Testis (tissue), 5 donors: ENCODE measurements at regions of chr14 and their contacts with region 1.

Region 1: DNA sequence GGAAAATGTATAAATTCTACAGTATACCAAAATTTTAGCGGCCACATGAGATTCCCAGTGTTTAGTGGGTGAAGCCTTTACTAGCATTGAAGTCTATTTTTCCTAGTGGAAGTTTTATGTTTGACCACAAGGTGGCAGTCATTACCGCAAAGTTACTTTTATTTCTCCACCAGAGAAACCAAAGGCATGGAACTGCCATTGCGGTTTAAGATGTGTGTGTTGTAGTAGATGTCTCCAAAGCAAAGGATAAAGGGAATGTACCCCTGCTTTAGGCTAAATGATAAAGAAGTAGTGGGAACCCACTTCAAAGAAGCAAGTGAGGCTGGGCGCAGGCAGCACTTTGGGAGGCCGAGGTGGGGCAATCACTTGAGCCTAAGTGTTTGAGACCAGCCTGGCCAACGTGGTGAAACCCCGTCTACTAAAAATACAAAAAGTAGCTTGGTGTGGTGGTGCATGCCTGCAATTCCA is 140.5 kb downstream of the PRKCH start:
- DNase-seq: peak; percentile 43
- H3K4me3 ChIP-seq: no peak overlapping the region
- H3K27ac ChIP-seq: no peak overlapping the region
- H3K4me1 ChIP-seq: peaks cover 11% of the 10 kb centered on the region
- H3K27me3 ChIP-seq: no peaks in the 10 kb centered on the region
- CTCF ChIP-seq: peak; percentile 91 to 94 (median 92)
- POLR2A ChIP-seq: no peak

Region 2: DNA sequence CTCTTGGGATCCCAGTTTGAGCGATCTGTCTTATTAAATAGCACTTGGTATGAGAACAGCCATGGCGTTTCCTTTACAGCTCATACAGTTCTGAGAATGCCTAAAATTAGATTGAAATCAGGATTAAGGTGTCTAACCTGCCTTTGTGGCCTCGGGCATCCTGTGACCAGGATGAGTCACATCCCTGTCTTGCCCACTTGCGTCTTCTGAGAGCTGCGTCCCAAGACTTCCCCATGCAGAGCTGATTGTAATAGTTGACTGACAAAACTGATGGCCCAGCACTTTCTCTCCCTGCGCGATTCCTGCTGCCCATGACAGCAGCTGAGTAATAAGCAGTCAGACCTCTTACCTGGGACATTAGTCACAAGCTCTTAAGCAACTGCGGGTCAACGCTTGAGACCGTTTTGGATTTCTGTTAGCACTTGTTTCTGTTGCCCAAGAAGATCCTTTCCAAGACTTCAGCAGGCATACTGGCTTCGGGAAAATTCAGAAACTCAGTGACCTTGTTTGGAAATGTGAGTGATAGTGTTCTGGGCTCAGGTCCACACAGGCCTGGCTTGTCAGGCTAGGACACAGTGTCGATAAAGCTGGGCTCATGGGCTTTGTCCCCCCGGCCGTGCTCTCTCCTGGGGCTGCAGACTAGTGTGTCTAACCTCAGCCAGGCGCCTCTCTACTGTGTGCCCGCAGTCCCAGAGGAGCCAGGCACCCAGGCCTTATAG is 63.6 kb after region 1 on chr14:
- intact Hi-C with region 1: loop called (anchors 5 kb)
- DNase-seq: peak; percentile 68
- H3K4me3 ChIP-seq: no peak overlapping the region
- H3K27ac ChIP-seq: peak overlapping the region; percentile 47 to 89
- H3K4me1 ChIP-seq: peaks cover 40% of the 10 kb centered on the region
- H3K27me3 ChIP-seq: no peaks in the 10 kb centered on the region
- CTCF ChIP-seq: no peak
- POLR2A ChIP-seq: no peak

Region 3: DNA sequence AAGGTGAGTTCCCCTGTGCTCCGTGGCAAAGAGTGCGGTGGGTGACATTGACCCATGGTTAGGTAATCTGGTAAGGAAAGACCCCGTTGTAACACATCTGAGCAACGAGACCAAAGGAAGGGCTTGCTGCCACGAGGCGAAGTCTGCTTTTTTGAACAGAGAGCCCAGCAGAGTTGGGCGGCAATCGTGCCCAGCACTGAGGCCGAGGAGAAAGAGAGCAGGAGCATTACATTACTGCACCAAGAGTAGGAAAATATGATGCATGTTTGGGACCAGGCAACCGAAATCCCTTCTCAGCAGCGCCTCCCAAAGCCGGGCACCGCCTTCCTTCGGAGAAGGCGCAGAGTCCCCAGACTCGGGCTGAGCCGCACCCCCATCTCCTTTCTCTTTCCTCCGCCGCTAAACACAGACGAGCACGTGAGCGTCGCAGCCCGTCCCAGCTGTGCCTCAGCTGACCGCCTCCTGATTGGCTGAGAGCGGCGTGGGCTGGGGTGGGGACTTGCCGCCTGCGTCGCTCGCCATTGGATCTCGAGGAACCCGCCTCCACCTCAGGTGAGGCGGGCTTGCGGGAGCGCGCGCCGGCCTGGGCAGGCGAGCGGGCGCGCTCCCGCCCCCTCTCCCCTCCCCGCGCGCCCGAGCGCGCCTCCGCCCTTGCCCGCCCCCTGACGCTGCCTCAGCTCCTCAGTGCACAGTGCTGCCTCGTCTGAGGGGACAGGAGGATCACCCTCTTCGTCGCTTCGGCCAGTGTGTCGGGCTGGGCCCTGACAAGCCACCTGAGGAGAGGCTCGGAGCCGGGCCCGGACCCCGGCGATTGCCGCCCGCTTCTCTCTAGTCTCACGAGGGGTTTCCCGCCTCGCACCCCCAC is 233.2 kb after region 1 on chr14 and contains the start of gene HIF1A:
- intact Hi-C with region 1: loop called (anchors 10 kb)
- DNase-seq: peak; percentile 98
- H3K4me3 ChIP-seq: peak within 1 kb of the TSS; percentile 73 to 97
- H3K27ac ChIP-seq: peak within 1 kb of the TSS; percentile 96 to 99
- H3K4me1 ChIP-seq: peaks cover 8% of the 10 kb centered on the region
- H3K27me3 ChIP-seq: no peaks in the 10 kb centered on the region
- CTCF ChIP-seq: peak in 1 of 3 experiments; percentile 2
- POLR2A ChIP-seq: peak; percentile 80
- total RNA-seq, gene HIF1A: 105 to 140 TPM

Region 4: GRCh38 chr14:61837336-61838229 is 375.7 kb after region 1 on chr14:
- intact Hi-C with region 1: loop called (anchors 5 kb)
- DNase-seq: peak; percentile 91
- H3K4me3 ChIP-seq: no peak overlapping the region
- H3K27ac ChIP-seq: no peak overlapping the region
- H3K4me1 ChIP-seq: no peaks in the 10 kb centered on the region
- H3K27me3 ChIP-seq: no peaks in the 10 kb centered on the region
- CTCF ChIP-seq: peak; percentile 92 to 95 (median 93)
- POLR2A ChIP-seq: no peak